ENCODE measurements at regions of chr2 and their contacts with region 1.

Region 1: DNA sequence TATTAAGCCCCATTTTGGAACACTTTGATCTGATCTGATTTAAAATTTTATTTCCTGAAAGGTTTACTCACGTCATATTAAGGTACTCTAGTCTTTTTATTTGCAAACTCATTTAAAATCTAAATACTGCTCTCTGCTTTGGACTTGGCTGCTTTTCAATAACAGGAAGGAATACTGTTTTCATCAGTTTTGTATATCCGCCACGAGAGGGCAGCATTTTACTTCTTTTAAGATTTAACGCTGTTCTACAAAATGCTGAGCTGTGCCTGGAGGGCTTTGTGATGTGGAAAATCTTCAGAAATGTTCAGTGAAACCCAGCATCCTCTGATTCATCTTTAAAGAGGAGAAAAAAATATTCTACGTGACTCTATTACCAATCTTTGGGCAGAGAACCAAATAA is 37.5 kb upstream of the SLC38A11 start:
- DNase-seq: peak; percentile 65
- ATAC-seq: peak; percentile 58
- H3K4me3 Mint-ChIP-seq: no peak overlapping the region
- H3K27ac Mint-ChIP-seq: no peak overlapping the region
- H3K4me1 Mint-ChIP-seq: peaks cover 15% of the 10 kb centered on the region
- H3K27me3 Mint-ChIP-seq: no peaks in the 10 kb centered on the region
- CTCF ChIP-seq: peak; percentile 71

Region 2: GRCh38 chr2:164737612-164738081 is 255.2 kb before region 1 on chr2:
- CTCF ChIA-PET with region 1: no interaction called
- POLR2A ChIA-PET with region 1: no interaction called
- intact Hi-C with region 1: loop called (anchors 5 kb)
- DNase-seq: peak; percentile 20
- ATAC-seq: peak; percentile 66
- H3K4me3 Mint-ChIP-seq: no peak overlapping the region
- H3K27ac Mint-ChIP-seq: no peak overlapping the region
- H3K4me1 Mint-ChIP-seq: no peaks in the 10 kb centered on the region
- H3K27me3 Mint-ChIP-seq: peaks cover 1% of the 10 kb centered on the region
- CTCF ChIP-seq: peak; percentile 66

Region 3: GRCh38 chr2:165067958-165068757 is 75.3 kb after region 1 on chr2:
- CTCF ChIA-PET with region 1: no interaction called
- POLR2A ChIA-PET with region 1: no interaction called
- intact Hi-C with region 1: no loop called
- DNase-seq: no peak
- ATAC-seq: no peak
- H3K4me3 Mint-ChIP-seq: no peak overlapping the region
- H3K27ac Mint-ChIP-seq: no peak overlapping the region
- H3K4me1 Mint-ChIP-seq: no peaks in the 10 kb centered on the region
- H3K27me3 Mint-ChIP-seq: no peaks in the 10 kb centered on the region
- CTCF ChIP-seq: no peak

Region 4: GRCh38 chr2:165203689-165204559 is 211.1 kb after region 1 on chr2 and contains the start of gene SCN3A:
- CTCF ChIA-PET with region 1: interaction called, 8 read pairs
- POLR2A ChIA-PET with region 1: no interaction called
- intact Hi-C with region 1: loop called (anchors 5 kb)
- DNase-seq: peak; percentile 19
- ATAC-seq: no peak
- H3K4me3 Mint-ChIP-seq: no peak within 1 kb of the TSS
- H3K27ac Mint-ChIP-seq: no peak within 1 kb of the TSS
- H3K4me1 Mint-ChIP-seq: no peaks in the 10 kb centered on the region
- H3K27me3 Mint-ChIP-seq: no peaks in the 10 kb centered on the region
- CTCF ChIP-seq: peak; percentile 77
- total RNA-seq, gene SCN3A: 0.07 TPM in 1 of 2 experiments, not detected in the other

Measured in activated CD8-positive, alpha-beta T cell treated with anti-CD3 and anti-CD28 coated beads for 36 hours (primary cell).